ENCODE measurements at regions of chr16 and their contacts with region 1.

Region 1: GRCh38 chr16:79449900-79450299 is 150.6 kb downstream of the MAF start:
- DNase-seq: no peak

Region 2: DNA sequence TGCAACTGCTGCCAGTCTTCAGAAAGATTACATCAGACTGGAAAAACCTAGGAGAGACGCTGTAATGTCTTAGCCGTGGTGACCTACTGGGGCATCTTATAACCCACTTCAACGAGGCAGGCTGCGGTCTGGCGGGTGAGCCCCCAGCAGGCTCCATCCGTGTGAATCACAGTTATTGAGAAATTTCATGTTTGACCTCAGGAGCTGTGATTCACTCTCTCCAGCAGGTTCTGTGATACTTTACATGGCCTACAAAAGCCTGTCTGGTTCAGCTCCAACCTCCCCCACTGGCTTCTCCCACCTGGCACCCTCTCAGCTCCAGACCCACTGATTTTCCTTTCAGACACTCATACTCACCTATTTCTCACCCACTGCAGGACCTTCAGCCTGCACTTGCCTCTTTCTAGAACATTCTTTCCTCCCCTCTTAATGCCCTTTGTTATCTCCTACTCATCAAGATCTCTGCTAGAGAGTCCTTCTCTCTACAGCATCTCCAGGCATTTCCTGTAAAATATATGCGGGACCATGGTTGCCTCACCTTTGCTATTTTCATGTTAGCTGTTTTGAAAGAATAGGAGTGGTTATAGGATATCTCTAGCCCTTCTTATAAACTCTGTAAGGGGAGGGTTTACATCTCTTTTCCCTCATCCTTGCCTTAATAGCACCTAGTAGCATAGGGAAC is 77.3 kb before region 1 on chr16:
- intact Hi-C with region 1: no loop called
- DNase-seq: no peak

Region 3: DNA sequence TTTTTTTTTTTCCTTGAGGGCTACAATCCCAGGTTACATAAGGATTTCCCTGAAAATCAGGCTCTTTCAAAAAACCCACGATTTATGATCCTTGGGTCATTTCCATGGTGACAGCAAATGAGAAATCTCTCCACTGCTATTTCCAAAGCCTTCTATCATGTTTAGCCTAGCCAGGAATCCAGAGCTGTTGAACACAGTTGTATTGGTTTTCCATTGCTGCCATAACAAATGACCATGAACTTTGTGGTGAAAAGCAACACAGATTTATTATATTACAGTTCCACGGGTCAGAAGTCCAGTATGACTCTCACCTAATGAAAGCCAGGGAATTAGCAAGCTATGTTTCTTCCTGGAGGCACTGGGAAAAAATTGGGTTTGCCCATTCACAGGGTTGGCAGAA is 44.0 kb after region 1 on chr16:
- intact Hi-C with region 1: no loop called
- DNase-seq: no peak

Region 4: DNA sequence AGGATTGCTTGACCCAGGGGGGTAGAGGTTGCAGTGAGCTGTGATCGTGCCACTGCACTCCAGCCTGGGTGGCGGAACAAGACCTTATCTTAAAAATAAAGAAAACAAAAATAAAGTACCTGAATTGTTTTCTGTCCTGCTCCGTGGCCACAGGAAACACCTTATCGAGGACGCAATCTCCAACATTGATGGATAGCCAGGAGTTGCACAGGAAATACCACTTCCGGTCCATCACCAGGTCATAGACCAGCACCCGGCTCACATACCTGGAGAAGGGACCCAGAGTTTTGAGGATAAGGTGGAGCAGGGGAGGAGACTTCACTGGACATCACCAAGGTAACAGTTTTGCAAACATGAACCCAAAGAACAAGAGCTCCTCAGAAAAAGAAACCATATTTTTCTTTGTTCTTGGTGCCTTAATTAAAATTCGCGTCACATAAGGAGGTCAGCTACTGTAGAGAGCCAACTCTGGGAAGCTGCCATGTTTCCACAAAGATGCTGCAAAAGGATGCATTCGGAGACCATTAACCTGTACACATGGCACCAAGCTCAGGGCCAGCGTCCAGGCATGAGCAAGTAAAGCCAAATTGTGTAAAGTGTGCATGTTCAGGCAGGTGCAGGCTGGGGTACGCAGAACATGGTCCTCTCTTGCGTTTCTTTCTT is 1701.9 kb after region 1 on chr16:
- intact Hi-C with region 1: loop called in 1 of 2 experiments (anchors 5 kb)
- DNase-seq: no peak